Left ventricle myocardium inferior (tissue), 1 donor: ENCODE measurements at regions of chr15 and their contacts with region 1.

Region 1: GRCh38 chr15:74127260-74127953 is 3.0 kb upstream of the ISLR2 start:
- DNase-seq: peak; percentile 89
- H3K4me3 ChIP-seq: peak overlapping the region; percentile 66
- H3K27ac ChIP-seq: peak overlapping the region; percentile 83
- H3K4me1 ChIP-seq: peaks cover 48% of the 10 kb centered on the region
- H3K27me3 ChIP-seq: peaks cover 93% of the 10 kb centered on the region
- CTCF ChIP-seq: peak; percentile 97

Region 2: DNA sequence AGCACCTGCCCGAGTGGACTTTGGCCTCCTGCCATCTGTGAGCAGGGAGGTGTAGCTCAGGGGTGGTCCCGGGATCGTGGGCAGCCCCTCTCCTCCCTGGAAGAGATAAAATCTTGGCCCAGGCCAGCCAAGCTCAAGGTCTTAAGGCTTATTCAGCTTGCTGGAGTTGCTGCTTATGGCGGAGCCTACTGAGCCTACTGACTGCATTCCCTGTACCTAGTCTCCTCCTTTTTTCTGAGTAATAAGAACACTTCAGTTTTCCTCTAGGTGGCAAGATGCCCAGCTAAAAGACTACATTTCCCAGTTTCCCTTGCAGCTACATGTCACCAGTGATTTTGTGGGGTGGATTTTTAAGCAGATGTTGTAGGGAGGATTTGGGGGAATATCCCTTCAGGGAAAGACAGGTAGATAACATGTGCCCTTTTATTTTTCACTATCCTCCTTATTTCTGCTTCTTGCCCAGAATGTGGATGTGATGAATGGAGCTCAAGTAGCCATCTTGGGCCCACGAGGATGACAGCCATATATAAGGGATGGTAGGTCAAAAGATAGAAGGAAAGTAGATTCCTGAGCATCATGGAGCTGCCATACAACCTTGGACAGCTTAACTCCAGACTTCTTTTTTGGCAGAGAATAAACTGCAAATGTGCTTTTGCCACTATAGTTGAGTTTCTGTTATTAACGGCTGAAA is 332.8 kb before region 1 on chr15:
- intact Hi-C with region 1: no loop called
- DNase-seq: no peak
- H3K4me3 ChIP-seq: no peak overlapping the region
- H3K27ac ChIP-seq: peak overlapping the region; percentile 8
- H3K4me1 ChIP-seq: peaks cover 33% of the 10 kb centered on the region
- H3K27me3 ChIP-seq: no peaks in the 10 kb centered on the region
- CTCF ChIP-seq: no peak

Region 3: DNA sequence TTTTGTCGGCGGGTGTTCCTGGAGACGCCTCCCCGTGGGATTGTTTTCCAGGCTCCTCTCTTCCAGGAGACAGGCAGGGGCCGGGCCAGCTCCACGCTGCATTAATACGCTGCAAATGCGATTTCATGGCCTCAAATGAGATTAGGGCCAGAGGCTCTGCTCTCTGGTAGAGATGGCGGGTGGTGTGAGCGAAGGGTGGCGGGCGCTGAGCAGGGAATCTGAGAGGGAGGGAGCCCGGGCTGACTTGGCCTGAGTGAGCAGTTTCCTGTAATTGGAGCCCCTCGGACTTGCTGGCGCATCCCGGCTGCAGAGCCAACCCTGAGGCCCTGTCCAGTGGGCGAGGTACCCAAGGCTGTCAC is 101.3 kb after region 1 on chr15:
- intact Hi-C with region 1: no loop called
- DNase-seq: no peak
- H3K4me3 ChIP-seq: peak overlapping the region; percentile 27
- H3K27ac ChIP-seq: peak overlapping the region; percentile 50
- H3K4me1 ChIP-seq: peaks cover 17% of the 10 kb centered on the region
- H3K27me3 ChIP-seq: peaks cover 21% of the 10 kb centered on the region
- CTCF ChIP-seq: no peak

Region 4: DNA sequence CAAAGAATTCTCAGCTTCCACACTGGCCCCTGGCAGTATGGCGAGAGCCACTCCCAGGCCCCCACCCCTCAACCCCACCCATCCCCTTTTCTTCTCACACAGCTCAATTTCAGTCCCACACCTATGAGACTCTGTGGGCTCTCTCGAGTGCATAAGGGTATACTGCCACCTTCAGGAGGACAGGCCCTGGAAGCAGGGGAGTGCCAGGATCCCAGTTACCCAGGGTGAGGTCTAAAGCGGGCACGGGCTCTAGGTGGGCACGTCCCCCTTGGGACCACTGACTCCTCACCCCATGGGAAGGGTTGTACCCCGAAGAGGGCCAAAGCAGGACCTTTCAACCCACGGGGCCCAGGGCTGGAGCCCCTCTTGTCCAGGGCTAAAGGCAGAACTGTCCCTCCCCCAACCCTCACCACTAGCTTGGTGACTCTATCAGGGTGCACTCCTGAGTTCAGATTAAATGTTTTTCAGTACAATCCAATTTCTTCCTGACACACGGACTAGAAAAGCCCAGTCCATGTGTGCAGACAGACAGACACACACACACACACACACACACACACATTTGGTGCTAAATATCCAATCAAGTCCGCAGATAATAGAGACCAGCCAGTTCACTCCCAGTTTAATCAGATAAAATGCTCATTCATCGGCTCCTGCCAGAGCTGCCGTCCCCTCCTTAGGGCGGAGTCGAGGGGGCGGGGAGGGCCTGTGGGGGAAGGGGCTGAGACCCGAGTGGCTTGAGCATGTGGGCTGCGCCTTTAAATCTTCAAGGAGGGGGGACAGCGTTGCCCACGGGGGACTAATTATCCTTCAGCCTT is 180.6 kb after region 1 on chr15:
- intact Hi-C with region 1: loop called (anchors 5 kb)
- DNase-seq: no peak
- H3K4me3 ChIP-seq: no peak overlapping the region
- H3K27ac ChIP-seq: no peak overlapping the region
- H3K4me1 ChIP-seq: peaks cover 1% of the 10 kb centered on the region
- H3K27me3 ChIP-seq: peaks cover 76% of the 10 kb centered on the region
- CTCF ChIP-seq: peak; percentile 77

Region 5: GRCh38 chr15:74322181-74323076 is 195.0 kb after region 1 on chr15:
- intact Hi-C with region 1: loop called (anchors 5 kb)
- DNase-seq: peak; percentile 59
- H3K4me3 ChIP-seq: no peak overlapping the region
- H3K27ac ChIP-seq: no peak overlapping the region
- H3K4me1 ChIP-seq: peaks cover 30% of the 10 kb centered on the region
- H3K27me3 ChIP-seq: no peaks in the 10 kb centered on the region
- CTCF ChIP-seq: peak; percentile 91